ENCODE measurements at regions of chr11 and their contacts with region 1.

Region 1: DNA sequence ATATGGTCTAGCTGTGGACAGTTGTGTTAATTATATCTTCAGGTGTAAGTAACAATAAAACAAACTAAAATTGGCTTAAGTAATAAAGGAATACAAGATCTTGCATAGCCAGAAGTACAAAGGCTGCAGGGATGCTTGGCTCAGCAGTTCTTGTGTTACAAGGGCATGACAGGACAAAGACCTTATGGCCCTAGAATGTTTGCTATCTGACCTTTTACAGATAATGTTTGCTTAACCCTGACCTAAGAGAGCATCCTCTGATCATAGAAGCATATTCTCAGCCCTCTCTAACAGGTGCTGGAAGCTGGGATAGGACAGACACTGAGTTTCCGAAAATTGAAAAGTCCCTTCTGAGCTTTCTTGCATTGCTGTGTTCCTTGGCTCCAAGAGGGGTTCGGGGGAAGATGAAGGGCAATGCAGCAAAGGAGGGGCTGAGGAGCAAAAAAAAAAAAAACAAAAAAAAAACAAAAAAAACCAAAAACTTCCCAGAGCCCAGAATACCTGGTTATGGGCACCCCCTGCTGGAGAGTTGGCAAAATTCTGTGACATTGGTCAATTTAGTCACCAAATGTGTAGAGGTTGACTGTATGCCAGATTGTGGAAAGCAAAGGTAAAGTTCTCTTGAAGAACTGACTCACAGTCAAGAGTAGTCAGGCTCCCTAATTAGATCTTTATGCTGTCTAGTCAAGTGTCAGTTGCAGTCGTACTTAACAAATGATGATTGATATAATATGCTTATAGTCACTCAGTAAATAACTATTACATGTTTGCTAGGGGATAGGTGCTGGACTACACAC is 10.4 kb upstream of the HIKESHI start:
- DNase-seq: peak; percentile 86
- H3K4me3 Mint-ChIP-seq: peak overlapping the region; percentile 21
- H3K27ac Mint-ChIP-seq: peak overlapping the region; percentile 70
- H3K4me1 Mint-ChIP-seq: peaks cover 48% of the 10 kb centered on the region
- H3K27me3 Mint-ChIP-seq: peaks cover 1% of the 10 kb centered on the region

Region 2: GRCh38 chr11:85826116-85826855 is 465.4 kb before region 1 on chr11:
- intact Hi-C with region 1: loop called (anchors 5 kb)
- DNase-seq: peak; percentile 79
- H3K4me3 Mint-ChIP-seq: peak overlapping the region; percentile 66
- H3K27ac Mint-ChIP-seq: peak overlapping the region; percentile 67
- H3K4me1 Mint-ChIP-seq: peaks cover 66% of the 10 kb centered on the region
- H3K27me3 Mint-ChIP-seq: no peaks in the 10 kb centered on the region

Region 3: GRCh38 chr11:86047275-86047991 is 244.2 kb before region 1 on chr11:
- intact Hi-C with region 1: loop called (anchors 1 kb)
- DNase-seq: peak; percentile 64
- H3K4me3 Mint-ChIP-seq: peak overlapping the region; percentile 57
- H3K27ac Mint-ChIP-seq: peak overlapping the region; percentile 96
- H3K4me1 Mint-ChIP-seq: peaks cover 72% of the 10 kb centered on the region
- H3K27me3 Mint-ChIP-seq: no peaks in the 10 kb centered on the region

Region 4: DNA sequence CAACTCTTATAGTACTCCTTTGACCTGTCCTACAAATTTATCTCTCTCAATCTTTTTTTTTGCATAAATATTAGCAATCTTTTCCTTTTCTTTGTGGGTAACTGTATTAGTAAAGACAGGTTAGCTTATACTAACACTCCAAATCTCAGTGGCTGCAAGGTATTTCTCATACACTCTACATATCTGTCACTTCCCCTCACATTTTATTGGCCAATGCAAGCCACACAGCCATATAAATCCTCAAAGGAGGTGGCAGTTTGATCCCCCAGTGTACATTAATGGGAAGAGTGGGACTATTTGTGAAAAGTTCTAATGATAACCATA is 89.7 kb before region 1 on chr11:
- intact Hi-C with region 1: loop called (anchors 1 kb)
- DNase-seq: peak; percentile 70
- H3K4me3 Mint-ChIP-seq: no peak overlapping the region
- H3K27ac Mint-ChIP-seq: no peak overlapping the region
- H3K4me1 Mint-ChIP-seq: peaks cover 14% of the 10 kb centered on the region
- H3K27me3 Mint-ChIP-seq: no peaks in the 10 kb centered on the region

Region 5: DNA sequence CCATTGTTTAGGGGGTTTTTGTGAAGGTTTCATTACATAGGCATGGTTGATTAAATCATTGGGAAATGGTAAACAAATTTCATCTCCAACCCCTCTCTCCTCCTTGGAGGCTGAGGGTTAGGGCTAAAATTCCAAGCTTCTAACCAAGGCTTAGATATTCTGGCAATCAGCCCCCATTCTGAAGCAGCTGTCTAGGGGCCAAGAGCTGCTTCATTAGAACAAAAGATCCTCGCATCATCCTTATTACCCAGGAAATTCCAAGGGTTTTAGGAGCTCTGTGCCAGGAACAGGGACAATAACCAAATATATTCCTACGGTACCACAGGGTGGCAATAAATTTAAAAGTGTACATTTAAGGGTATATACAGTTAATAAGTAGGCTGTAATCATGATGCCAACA is 69.6 kb before region 1 on chr11:
- intact Hi-C with region 1: no loop called
- DNase-seq: no peak
- H3K4me3 Mint-ChIP-seq: no peak overlapping the region
- H3K27ac Mint-ChIP-seq: no peak overlapping the region
- H3K4me1 Mint-ChIP-seq: peaks cover 43% of the 10 kb centered on the region
- H3K27me3 Mint-ChIP-seq: no peaks in the 10 kb centered on the region

Region 6: GRCh38 chr11:86255896-86256295 is 35.8 kb before region 1 on chr11:
- intact Hi-C with region 1: loop called (anchors 2 kb)
- DNase-seq: no peak
- H3K4me3 Mint-ChIP-seq: peak overlapping the region; percentile 11
- H3K27ac Mint-ChIP-seq: peak overlapping the region; percentile 66
- H3K4me1 Mint-ChIP-seq: peaks cover 30% of the 10 kb centered on the region
- H3K27me3 Mint-ChIP-seq: no peaks in the 10 kb centered on the region

Region 7: DNA sequence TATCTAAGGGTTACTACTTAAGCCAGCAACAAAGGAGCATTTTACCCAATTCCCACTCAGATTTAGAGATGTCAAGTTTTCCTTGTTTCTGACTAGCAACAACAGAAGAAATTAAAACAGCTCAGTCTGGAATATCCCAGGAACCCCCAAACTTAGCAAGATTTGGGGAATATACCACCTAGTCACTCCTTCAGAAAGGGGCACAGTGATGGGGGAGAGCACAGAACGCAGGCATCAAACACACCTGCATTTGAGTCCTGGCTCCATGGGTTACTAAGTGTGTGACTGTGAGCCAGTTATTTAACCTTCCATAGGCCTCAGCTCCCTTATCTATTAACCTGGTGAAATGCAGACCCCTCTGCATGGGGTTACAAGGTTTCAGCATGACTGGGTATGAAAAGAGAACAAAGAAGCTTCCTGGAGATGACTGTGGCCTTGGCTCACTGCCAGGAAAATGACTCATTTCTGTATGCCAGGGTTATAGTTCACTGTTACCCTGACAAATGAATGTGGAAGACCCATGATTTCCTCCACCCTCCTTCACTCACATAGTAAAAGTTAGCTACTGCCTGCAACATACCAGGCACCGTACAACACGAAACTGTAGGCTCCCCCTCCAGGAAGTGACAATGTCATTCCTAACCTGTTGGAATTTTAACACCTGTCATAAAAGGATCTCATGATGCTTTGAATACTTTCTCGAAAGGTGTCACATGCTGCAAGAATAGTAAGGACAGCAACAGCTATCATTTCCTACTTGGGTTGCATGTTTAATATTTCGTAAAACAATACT is 301.2 kb after region 1 on chr11:
- intact Hi-C with region 1: loop called (anchors 2 kb)
- DNase-seq: peak; percentile 94
- H3K4me3 Mint-ChIP-seq: peak overlapping the region; percentile 62
- H3K27ac Mint-ChIP-seq: peak overlapping the region; percentile 90
- H3K4me1 Mint-ChIP-seq: peaks cover 47% of the 10 kb centered on the region
- H3K27me3 Mint-ChIP-seq: no peaks in the 10 kb centered on the region